Activated T-helper 2 cell treated with anti-CD3 and anti-CD28 coated beads, Interferon-gamma antibody, Interleukin-2, Interleukin-4, amounts not matched to agents 10 μg/mL and 5 μg/mL and 100 μg/mL, durations not matched to agents 14 hours and 24 hours and 36 hours (primary cell): ENCODE measurements at regions of chr5 and their contacts with region 1.

Region 1: DNA sequence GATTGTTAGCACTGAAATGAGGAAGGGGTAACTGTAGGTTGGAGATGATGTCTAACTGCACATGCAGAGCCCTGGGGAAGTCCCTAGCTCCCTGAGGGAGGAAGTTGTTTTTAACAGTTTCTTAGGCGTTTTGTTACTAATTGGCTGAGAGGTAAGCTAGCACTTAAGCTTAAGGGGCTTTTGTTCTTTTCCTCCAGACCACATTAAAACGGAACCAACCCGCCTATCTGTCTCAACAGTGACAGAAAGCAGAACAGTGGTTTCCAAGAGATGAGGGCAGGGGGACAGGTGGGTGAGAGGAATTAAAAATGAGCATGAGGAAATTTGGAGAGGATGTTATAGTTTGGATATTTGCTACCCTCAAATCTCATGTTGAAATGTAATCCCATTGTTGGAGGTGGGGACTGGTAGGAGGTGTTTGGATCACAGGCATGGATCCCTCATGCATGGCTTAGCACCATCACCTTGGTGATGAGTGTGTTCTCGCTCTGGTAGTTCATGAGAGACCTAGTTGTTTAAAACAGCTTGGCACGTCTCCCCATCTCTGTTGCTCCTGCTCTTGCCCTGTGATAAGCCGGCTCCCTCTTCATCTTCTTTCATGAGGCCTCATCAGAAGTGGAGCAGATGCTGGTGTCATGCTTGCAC is 38.9 kb downstream of the LYRM7 start:
- DNase-seq: peak; percentile 40
- H3K4me3 Mint-ChIP-seq: peak overlapping the region; percentile 80
- H3K27ac Mint-ChIP-seq: peak overlapping the region; percentile 96
- H3K4me1 Mint-ChIP-seq: peaks cover 53% of the 10 kb centered on the region
- H3K27me3 Mint-ChIP-seq: no peaks in the 10 kb centered on the region

Region 2: GRCh38 chr5:131170540-131171275 is 38.9 kb before region 1 on chr5 and contains the start of gene LYRM7:
- intact Hi-C with region 1: loop called (anchors 1 kb)
- DNase-seq: peak; percentile 97
- H3K4me3 Mint-ChIP-seq: peak within 1 kb of the TSS; percentile 99
- H3K27ac Mint-ChIP-seq: peak within 1 kb of the TSS; percentile 95
- H3K4me1 Mint-ChIP-seq: peaks cover 34% of the 10 kb centered on the region
- H3K27me3 Mint-ChIP-seq: no peaks in the 10 kb centered on the region
- total RNA-seq, gene LYRM7: 14.0 and 20.3 TPM in 2 replicates

Region 3: GRCh38 chr5:131263648-131264450 is 54.2 kb after region 1 on chr5 and contains the start of gene CDC42SE2:
- intact Hi-C with region 1: loop called (anchors 2 kb)
- DNase-seq: peak; percentile 85
- H3K4me3 Mint-ChIP-seq: peak within 1 kb of the TSS; percentile 83
- H3K27ac Mint-ChIP-seq: peak within 1 kb of the TSS; percentile 90
- H3K4me1 Mint-ChIP-seq: peaks cover 38% of the 10 kb centered on the region
- H3K27me3 Mint-ChIP-seq: no peaks in the 10 kb centered on the region
- total RNA-seq, gene CDC42SE2: 89.5 and 91.0 TPM in 2 replicates